Right lobe of liver (tissue), 6 donors: ENCODE measurements at regions of chr16 and their contacts with region 1.

Region 1: GRCh38 chr16:69040138-69040909 is 65.1 kb upstream of the HAS3 start:
- DNase-seq: peak; percentile 32 to 77 (median 75)
- ATAC-seq: peak; percentile 84 to 96 (median 92)
- H3K4me3 ChIP-seq: no peak overlapping the region
- H3K27ac ChIP-seq: peak overlapping the region in 1 of 3 donors; percentile 60
- H3K4me1 ChIP-seq: peaks cover 0 to 17% (median 5%) of the 10 kb centered on the region in 4 donors
- H3K27me3 ChIP-seq: no peaks in the 10 kb centered on the region
- CTCF ChIP-seq: no peak
- POLR2A ChIP-seq: no peak

Region 2: GRCh38 chr16:69105489-69106361 is 65.4 kb after region 1 on chr16 and contains the start of gene HAS3:
- intact Hi-C with region 1: loop called in 1 of 2 experiments (anchors 10 kb)
- DNase-seq: peak; percentile 75 to 79 (median 76)
- ATAC-seq: peak; percentile 83 to 94 (median 90)
- H3K4me3 ChIP-seq: peak within 1 kb of the TSS; percentile 49 to 60 (median 55)
- H3K27ac ChIP-seq: no peak within 1 kb of the TSS
- H3K4me1 ChIP-seq: peaks cover 0 to 21% (median 6%) of the 10 kb centered on the region in 4 donors
- H3K27me3 ChIP-seq: no peaks in the 10 kb centered on the region
- CTCF ChIP-seq: peak in 2 of 4 donors; percentile 27
- POLR2A ChIP-seq: peak; percentile 62
- total RNA-seq, gene HAS3: 0.39 to 1.0 (median 0.63) TPM